A549 (cell line): ENCODE measurements at regions of chr1 and their contacts with region 1.

Region 1: GRCh38 chr1:94335950-94336349 is 82.2 kb upstream of the ABCD3 start:
- DNase-seq: peak; percentile 18 to 89
- ATAC-seq: peak; percentile 89 to 94
- H3K4me3 ChIP-seq: no peak overlapping the region
- H3K27ac ChIP-seq: peak overlapping the region; percentile 38 to 55; a peak in 2 of 6 replicates
- H3K4me1 ChIP-seq: peaks cover 22% of the 10 kb centered on the region
- CTCF ChIP-seq: peak; percentile 99
- EP300 ChIP-seq: no peak
- POLR2A ChIP-seq: no peak
- RAD21 ChIP-seq: peak; percentile 99

Region 2: GRCh38 chr1:94045465-94046056 is 290.4 kb before region 1 on chr1:
- CTCF ChIA-PET with region 1: interaction called, 840 read pairs
- POLR2A ChIA-PET with region 1: no interaction called
- DNase-seq: peak; percentile 93 to 96
- ATAC-seq: peak; percentile 98 to 99
- H3K4me3 ChIP-seq: no peak overlapping the region
- H3K27ac ChIP-seq: peak overlapping the region; percentile 49 to 83
- H3K4me1 ChIP-seq: peaks cover 17% of the 10 kb centered on the region
- CTCF ChIP-seq: peak; percentile 92
- EP300 ChIP-seq: no peak
- POLR2A ChIP-seq: no peak
- RAD21 ChIP-seq: peak; percentile 81 to 95

Region 3: GRCh38 chr1:94068999-94069918 is 266.7 kb before region 1 on chr1:
- CTCF ChIA-PET with region 1: interaction called, 284 read pairs
- POLR2A ChIA-PET with region 1: no interaction called
- DNase-seq: peak; percentile 47 to 73
- ATAC-seq: peak; percentile 88 to 96
- H3K4me3 ChIP-seq: no peak overlapping the region
- H3K27ac ChIP-seq: peak overlapping the region; percentile 86
- H3K4me1 ChIP-seq: peaks cover 34% of the 10 kb centered on the region
- CTCF ChIP-seq: no peak
- EP300 ChIP-seq: no peak; a peak in 1 of 5 replicates
- POLR2A ChIP-seq: no peak
- RAD21 ChIP-seq: no peak

Region 4: DNA sequence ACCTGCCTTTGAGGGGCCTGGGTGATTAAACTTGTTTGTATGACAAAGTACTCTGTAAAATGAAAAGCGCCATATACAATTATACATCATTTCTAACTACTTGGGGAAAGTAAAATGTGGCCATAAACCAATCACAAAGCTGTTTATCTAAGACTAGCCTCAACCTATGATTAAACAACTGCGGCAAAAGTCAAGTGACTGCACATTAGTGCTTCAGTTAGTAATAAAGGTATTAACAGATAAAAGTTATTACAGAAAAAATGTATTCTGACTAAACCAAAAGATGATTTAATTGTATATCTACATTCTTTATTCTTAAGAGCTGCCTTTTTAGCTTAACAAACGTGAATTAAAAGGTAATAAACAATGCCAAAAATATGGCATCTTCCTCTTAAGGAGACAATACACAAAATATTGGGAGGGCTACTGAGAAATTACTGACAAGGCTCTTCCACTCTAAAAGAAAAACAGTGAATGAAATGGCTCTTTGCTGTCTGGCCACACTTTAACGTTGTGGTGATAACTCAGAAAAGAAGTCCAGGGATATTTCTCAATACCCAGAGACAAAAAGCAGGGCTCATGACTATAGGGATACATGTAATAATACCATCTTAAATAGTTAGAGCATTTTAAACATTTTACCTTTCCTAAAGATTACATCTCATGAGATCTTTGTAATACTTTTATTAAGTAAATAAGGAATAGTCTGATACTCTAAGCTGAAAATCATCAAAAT is 107.1 kb before region 1 on chr1:
- CTCF ChIA-PET with region 1: interaction called, 34 read pairs
- POLR2A ChIA-PET with region 1: no interaction called
- DNase-seq: no peak
- ATAC-seq: no peak
- H3K4me3 ChIP-seq: no peak overlapping the region
- H3K27ac ChIP-seq: no peak overlapping the region
- H3K4me1 ChIP-seq: peaks cover 48% of the 10 kb centered on the region
- CTCF ChIP-seq: no peak
- EP300 ChIP-seq: no peak
- POLR2A ChIP-seq: no peak
- RAD21 ChIP-seq: no peak

Region 5: GRCh38 chr1:94255476-94255875 is 80.5 kb before region 1 on chr1:
- CTCF ChIA-PET with region 1: interaction called, 18 read pairs
- POLR2A ChIA-PET with region 1: no interaction called
- DNase-seq: no peak
- ATAC-seq: no peak
- H3K4me3 ChIP-seq: no peak overlapping the region
- H3K27ac ChIP-seq: no peak overlapping the region
- H3K4me1 ChIP-seq: peaks cover 35% of the 10 kb centered on the region
- CTCF ChIP-seq: no peak
- EP300 ChIP-seq: no peak
- POLR2A ChIP-seq: no peak
- RAD21 ChIP-seq: no peak

Region 6: DNA sequence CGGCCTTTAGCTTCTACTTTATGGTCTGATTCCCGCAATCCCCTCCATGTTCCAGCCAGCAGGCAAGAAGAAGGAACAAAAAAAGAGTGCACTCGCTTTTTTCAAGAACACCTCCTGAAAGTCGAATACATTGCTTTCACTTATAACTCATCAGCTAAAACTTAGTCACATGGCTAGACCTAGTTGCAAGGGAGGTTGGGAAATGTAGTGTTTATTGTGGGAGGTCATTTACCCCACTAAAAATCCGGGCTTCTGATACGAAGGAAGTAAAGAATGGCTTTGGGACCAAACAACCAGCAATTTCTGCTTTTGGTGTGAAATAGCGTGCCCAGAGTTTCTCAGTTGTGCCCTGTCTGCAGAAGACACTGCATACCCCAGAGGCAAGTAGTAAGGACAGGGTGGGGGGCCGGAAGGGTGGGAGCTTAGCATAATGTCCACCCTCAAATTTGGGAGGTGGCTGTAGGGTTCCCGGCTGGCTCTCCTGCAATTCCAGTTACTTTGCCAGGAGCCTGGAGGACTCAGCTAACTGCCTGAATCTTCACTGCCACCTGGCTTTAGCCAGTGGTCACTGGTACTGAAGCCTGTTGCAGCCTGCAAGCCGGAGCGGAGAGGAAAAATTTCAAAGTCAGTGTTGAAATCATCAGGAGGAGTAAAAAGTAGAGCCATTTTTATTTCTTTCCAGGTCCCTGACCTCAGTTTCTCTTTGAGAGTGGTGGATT is 263.3 kb after region 1 on chr1:
- CTCF ChIA-PET with region 1: no interaction called
- POLR2A ChIA-PET with region 1: no interaction called
- DNase-seq: peak; percentile 10 to 37
- ATAC-seq: peak; percentile 72 to 84; a peak in 4 of 6 replicates
- H3K4me3 ChIP-seq: no peak overlapping the region
- H3K27ac ChIP-seq: no peak overlapping the region
- H3K4me1 ChIP-seq: no peaks in the 10 kb centered on the region
- CTCF ChIP-seq: no peak; the same call in 2 of the 3 replicates
- EP300 ChIP-seq: no peak
- POLR2A ChIP-seq: no peak
- RAD21 ChIP-seq: peak; percentile 58 to 63

Region 7: GRCh38 chr1:94805912-94806311 is 470.0 kb after region 1 on chr1:
- CTCF ChIA-PET with region 1: interaction called, 11 read pairs
- POLR2A ChIA-PET with region 1: no interaction called
- DNase-seq: peak; percentile 26 to 43
- ATAC-seq: peak; percentile 38 to 53; a peak in 3 of 6 replicates
- H3K4me3 ChIP-seq: no peak overlapping the region
- H3K27ac ChIP-seq: no peak overlapping the region
- H3K4me1 ChIP-seq: peaks cover 9% of the 10 kb centered on the region; the same call in 2 of the 3 replicates
- CTCF ChIP-seq: peak; percentile 88
- EP300 ChIP-seq: no peak
- POLR2A ChIP-seq: no peak
- RAD21 ChIP-seq: peak; percentile 90 to 93

Region 8: DNA sequence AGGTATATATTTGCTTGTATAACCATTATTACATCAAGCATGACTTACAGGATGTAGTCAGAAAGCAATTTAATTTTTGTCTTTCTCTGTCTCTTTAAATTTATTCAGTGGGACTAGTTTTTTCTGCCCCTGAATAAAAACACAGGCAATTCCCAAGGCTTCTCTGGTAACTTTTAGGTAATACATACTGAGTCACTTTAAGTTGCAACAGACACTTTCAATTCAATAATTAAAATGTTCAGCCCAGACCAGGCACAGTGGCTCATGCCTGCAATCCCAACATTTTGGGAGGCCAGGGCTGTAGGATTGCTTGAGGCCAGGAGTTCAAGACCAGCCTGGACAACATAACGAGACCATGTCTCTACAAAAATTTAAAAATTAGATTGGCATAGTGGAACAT is 496.5 kb after region 1 on chr1:
- CTCF ChIA-PET with region 1: no interaction called
- POLR2A ChIA-PET with region 1: no interaction called
- DNase-seq: no peak
- ATAC-seq: no peak
- H3K4me3 ChIP-seq: no peak overlapping the region
- H3K27ac ChIP-seq: no peak overlapping the region
- H3K4me1 ChIP-seq: no peaks in the 10 kb centered on the region
- CTCF ChIP-seq: no peak
- EP300 ChIP-seq: no peak
- POLR2A ChIP-seq: no peak
- RAD21 ChIP-seq: no peak